GM12878 (cell line): ENCODE measurements at regions of chr10 and their contacts with region 1.

Region 1: GRCh38 chr10:68988530-68989316 is at the start of gene KIFBP:
- DNase-seq: peak; percentile 89
- ATAC-seq: peak; percentile 86
- H3K4me3 ChIP-seq: peak within 1 kb of the TSS; percentile 86
- H3K27ac ChIP-seq: peak within 1 kb of the TSS; percentile 70
- H3K4me1 ChIP-seq: peaks cover 7% of the 10 kb centered on the region
- H3K27me3 ChIP-seq: no peaks in the 10 kb centered on the region
- CTCF ChIP-seq: peak; percentile 44 to 60 (median 47); a peak in 5 of 6 replicates
- EP300 ChIP-seq: 0 out of 4 replicates have a peak, but pooled peaks of 1 of the 2 experiments have one; percentile 24
- POLR2A ChIP-seq: peak; percentile 86
- RAD21 ChIP-seq: peak; percentile 20; the same call in 1 of the 2 replicates
- polyA plus RNA-seq, gene KIFBP: 8.6 to 10.0 TPM

Region 2: GRCh38 chr10:68792115-68792514 is 196.6 kb before region 1 on chr10:
- CTCF ChIA-PET with region 1: no interaction called
- POLR2A ChIA-PET with region 1: no interaction called
- RAD21 ChIA-PET with region 1: no interaction called
- SMC1A ChIA-PET with region 1: no interaction called
- in situ Hi-C with region 1: no loop called
- intact Hi-C with region 1: no loop called
- DNase-seq: no peak
- ATAC-seq: no peak
- H3K4me3 ChIP-seq: no peak overlapping the region
- H3K27ac ChIP-seq: no peak overlapping the region
- H3K4me1 ChIP-seq: no peaks in the 10 kb centered on the region
- H3K27me3 ChIP-seq: no peaks in the 10 kb centered on the region
- CTCF ChIP-seq: no peak; a peak in 1 of 6 replicates
- EP300 ChIP-seq: no peak
- POLR2A ChIP-seq: no peak
- RAD21 ChIP-seq: no peak

Region 3: GRCh38 chr10:68955832-68956532 is 32.7 kb before region 1 on chr10 and contains the start of gene DDX21:
- CTCF ChIA-PET with region 1: interaction called, 14 read pairs
- POLR2A ChIA-PET with region 1: interaction called, 5 read pairs
- RAD21 ChIA-PET with region 1: interaction called, 6 read pairs
- SMC1A ChIA-PET with region 1: interaction called, 6 read pairs
- in situ Hi-C with region 1: no loop called
- intact Hi-C with region 1: no loop called
- DNase-seq: peak; percentile 76
- ATAC-seq: peak; percentile 87
- H3K4me3 ChIP-seq: peak within 1 kb of the TSS; percentile 93
- H3K27ac ChIP-seq: peak within 1 kb of the TSS; percentile 94
- H3K4me1 ChIP-seq: no peaks in the 10 kb centered on the region
- H3K27me3 ChIP-seq: no peaks in the 10 kb centered on the region
- CTCF ChIP-seq: peak; percentile 66 to 77 (median 69)
- EP300 ChIP-seq: no peak
- POLR2A ChIP-seq: peak; percentile 94
- RAD21 ChIP-seq: peak; percentile 53
- polyA plus RNA-seq, gene DDX21: 80.8 to 88.5 TPM

Region 4: GRCh38 chr10:68963151-68963550 is 25.6 kb before region 1 on chr10:
- CTCF ChIA-PET with region 1: interaction called, 4 read pairs
- POLR2A ChIA-PET with region 1: interaction called, 5 read pairs
- RAD21 ChIA-PET with region 1: interaction called, 6 read pairs
- SMC1A ChIA-PET with region 1: interaction called, 10 read pairs
- in situ Hi-C with region 1: no loop called
- intact Hi-C with region 1: no loop called
- DNase-seq: no peak
- ATAC-seq: no peak
- H3K4me3 ChIP-seq: no peak overlapping the region
- H3K27ac ChIP-seq: no peak overlapping the region
- H3K4me1 ChIP-seq: no peaks in the 10 kb centered on the region
- H3K27me3 ChIP-seq: no peaks in the 10 kb centered on the region
- CTCF ChIP-seq: no peak
- EP300 ChIP-seq: no peak
- POLR2A ChIP-seq: no peak
- RAD21 ChIP-seq: no peak

Region 5: DNA sequence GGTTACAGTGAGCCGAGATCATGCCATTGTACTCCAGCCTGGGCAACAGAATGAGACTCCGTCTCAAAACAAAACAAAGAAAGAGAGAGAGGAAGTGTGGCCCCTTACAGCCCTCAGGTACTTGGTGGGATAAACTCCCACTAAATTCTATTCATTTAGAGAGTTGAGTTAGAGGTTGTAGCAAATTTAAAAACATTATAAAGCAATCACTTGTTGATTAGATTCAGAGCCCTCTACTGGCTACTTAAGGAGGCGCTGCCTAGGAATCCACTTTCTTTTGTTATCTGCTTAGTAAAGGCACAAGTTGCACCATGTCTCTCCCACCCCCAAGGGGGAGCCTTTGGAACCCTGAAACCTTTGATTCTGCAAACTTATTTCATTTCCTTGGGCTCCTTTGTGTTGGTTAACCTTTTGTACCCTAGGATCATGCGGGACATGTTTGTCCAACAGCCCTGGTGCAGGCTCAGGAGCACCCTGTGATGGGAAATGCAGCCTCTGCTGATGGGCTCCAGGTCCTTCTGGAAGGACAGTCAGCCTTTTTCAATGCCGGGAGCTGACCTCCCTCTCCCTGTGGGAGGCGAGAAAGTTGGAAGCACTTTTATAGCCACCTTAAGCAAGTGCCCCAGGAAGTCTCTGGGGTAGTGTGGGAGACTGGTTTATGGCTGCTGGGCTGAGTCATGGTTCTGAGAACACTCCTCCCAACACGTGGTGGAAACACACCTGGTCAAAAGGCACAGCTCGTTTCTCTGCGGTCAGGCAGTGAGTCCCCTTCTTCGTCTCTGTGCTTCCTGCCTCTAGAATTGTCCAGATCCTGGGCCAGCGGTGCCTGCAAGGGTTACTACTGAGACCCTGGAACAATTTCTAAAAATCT is 233.7 kb after region 1 on chr10:
- CTCF ChIA-PET with region 1: no interaction called
- POLR2A ChIA-PET with region 1: no interaction called
- RAD21 ChIA-PET with region 1: no interaction called
- SMC1A ChIA-PET with region 1: no interaction called
- in situ Hi-C with region 1: loop called (anchors 10 kb)
- intact Hi-C with region 1: loop called (anchors 1 kb)
- DNase-seq: peak; percentile 88
- ATAC-seq: peak; percentile 97
- H3K4me3 ChIP-seq: peak overlapping the region; percentile 63
- H3K27ac ChIP-seq: peak overlapping the region; percentile 80
- H3K4me1 ChIP-seq: peaks cover 25% of the 10 kb centered on the region
- H3K27me3 ChIP-seq: no peaks in the 10 kb centered on the region
- CTCF ChIP-seq: peak; percentile 71 to 82 (median 77)
- EP300 ChIP-seq: peak; percentile 83 to 86
- POLR2A ChIP-seq: peak; percentile 69
- RAD21 ChIP-seq: peak; percentile 62

Region 6: DNA sequence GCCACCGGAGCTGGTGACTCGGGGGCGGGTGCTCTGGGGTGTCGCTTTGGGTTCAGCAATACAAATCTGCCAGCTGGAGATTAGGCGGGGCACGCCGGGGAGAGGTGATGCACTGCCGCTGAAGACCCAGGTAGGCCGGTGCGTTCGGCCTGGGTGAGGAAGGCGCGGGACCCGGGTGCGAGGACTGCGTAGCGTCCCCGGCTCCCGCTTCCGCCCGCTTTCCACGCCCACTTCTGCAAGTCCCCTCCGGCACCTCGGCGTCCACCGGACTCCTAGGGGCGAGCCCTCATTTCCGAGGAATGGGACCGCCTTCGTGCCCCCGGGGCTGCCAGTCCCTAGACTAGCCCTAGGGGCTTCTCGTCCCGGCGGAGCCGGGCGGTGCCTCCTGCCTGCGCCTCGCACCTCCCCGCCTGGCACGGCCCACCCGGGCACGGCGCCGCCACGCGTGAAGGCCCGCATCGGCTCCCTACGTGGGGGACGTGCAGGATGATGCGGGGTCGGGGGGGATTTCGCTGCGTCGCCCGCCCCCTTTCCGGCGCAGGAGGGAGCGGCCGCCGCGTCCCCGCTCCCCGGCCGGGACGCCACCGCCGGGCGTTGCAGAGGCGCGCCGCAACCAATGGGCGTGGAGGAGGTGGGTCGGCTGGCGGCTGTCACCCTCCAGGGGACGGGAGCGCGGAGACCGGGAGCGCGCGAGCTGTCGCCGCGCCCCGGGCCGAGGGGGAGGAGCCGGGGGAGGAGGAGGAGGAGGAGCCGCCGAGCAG is 329.6 kb after region 1 on chr10:
- CTCF ChIA-PET with region 1: no interaction called
- POLR2A ChIA-PET with region 1: no interaction called
- RAD21 ChIA-PET with region 1: no interaction called
- SMC1A ChIA-PET with region 1: no interaction called
- in situ Hi-C with region 1: no loop called
- intact Hi-C with region 1: loop called (anchors 10 kb)
- DNase-seq: peak; percentile 44
- ATAC-seq: peak; percentile 92
- H3K4me3 ChIP-seq: peak overlapping the region; percentile 93
- H3K27ac ChIP-seq: peak overlapping the region; percentile 85
- H3K4me1 ChIP-seq: peaks cover 18% of the 10 kb centered on the region
- H3K27me3 ChIP-seq: no peaks in the 10 kb centered on the region
- CTCF ChIP-seq: no peak
- EP300 ChIP-seq: no peak
- POLR2A ChIP-seq: peak; percentile 81
- RAD21 ChIP-seq: no peak

Region 7: GRCh38 chr10:69392481-69393000 is 403.8 kb after region 1 on chr10:
- CTCF ChIA-PET with region 1: interaction called, 3 read pairs
- POLR2A ChIA-PET with region 1: no interaction called
- RAD21 ChIA-PET with region 1: no interaction called
- SMC1A ChIA-PET with region 1: no interaction called
- in situ Hi-C with region 1: no loop called
- intact Hi-C with region 1: loop called (anchors 10 kb)
- DNase-seq: peak; percentile 51
- ATAC-seq: peak; percentile 100
- H3K4me3 ChIP-seq: no peak overlapping the region
- H3K27ac ChIP-seq: no peak overlapping the region
- H3K4me1 ChIP-seq: no peaks in the 10 kb centered on the region
- H3K27me3 ChIP-seq: no peaks in the 10 kb centered on the region
- CTCF ChIP-seq: peak; percentile 96 to 99 (median 98); a peak in 5 of 6 replicates
- EP300 ChIP-seq: no peak
- POLR2A ChIP-seq: no peak
- RAD21 ChIP-seq: peak; percentile 97